Adrenal gland (tissue), 19 donors: ENCODE measurements at regions of chr2 and their contacts with region 1.

Region 1: DNA sequence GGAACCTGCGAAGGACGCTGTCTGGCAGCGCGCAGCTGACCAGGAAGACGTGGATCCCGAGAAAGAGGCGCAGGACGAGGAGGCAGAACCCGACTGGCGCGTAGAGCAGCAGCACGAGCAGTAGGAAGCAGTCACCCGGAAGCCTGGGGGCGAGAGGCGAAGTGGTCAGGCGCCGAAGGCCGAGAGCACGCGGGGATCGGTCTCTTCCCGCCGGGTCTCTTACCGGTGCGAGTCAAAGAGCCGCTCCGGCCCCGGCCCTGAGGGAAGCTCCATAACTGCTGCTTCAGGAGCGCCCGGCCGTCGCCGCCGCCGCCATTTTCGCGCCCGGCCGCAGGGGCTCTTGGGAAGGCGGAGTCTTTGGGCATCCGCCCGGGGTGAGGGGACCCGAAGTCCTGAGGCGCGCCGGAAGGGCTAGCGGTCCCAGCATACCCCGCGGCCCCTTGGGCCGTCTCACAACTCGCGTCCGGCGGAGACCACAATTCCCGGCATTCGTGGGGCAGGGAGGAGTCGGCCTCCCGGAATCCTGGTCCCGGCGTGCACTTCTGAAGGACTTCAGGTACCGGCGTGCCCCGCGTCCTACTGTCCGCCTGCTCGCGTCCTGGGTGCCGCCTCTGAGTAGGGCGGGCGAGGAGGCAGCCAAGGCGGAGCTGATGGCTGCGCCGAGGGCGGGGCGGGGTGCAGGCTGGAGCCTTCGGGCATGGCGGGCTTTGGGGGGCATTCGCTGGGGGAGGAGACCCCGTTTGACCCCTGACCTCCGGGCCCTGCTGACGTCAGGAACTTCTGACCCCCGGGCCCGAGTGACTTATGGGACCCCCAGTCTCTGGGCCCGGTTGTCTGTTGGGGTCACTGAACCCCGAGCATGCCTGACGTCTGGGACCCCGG is at the starts of genes AUP1 and HTRA2:
- DNase-seq: peak; percentile 98 to 99 (median 99)
- H3K4me3 ChIP-seq: peak within 1 kb of the TSS; percentile 63 to 87 (median 78)
- H3K27ac ChIP-seq: peak within 1 kb of the TSS; percentile 65 to 93 (median 83)
- H3K4me1 ChIP-seq: peaks cover 11 to 15% of the 10 kb centered on the region in 2 donors
- H3K27me3 ChIP-seq: no peaks in the 10 kb centered on the region
- CTCF ChIP-seq: peak in 3 of 6 experiments; percentile 2 to 20 (median 14)
- POLR2A ChIP-seq: peak; percentile 42 to 76
- total RNA-seq, gene AUP1: 88.5 to 124 (median 109) TPM
- total RNA-seq, gene HTRA2: 19.1 to 47.4 (median 37.0) TPM

Region 2: GRCh38 chr2:74092275-74092674 is 437.3 kb before region 1 on chr2:
- intact Hi-C with region 1: no loop called
- DNase-seq: peak in 1 of 7 donors; percentile 46
- H3K4me3 ChIP-seq: no peak overlapping the region
- H3K27ac ChIP-seq: peak overlapping the region in 1 of 5 donors; percentile 55
- H3K4me1 ChIP-seq: no peaks in the 10 kb centered on the region
- H3K27me3 ChIP-seq: no peaks in the 10 kb centered on the region
- CTCF ChIP-seq: no peak
- POLR2A ChIP-seq: no peak

Region 3: DNA sequence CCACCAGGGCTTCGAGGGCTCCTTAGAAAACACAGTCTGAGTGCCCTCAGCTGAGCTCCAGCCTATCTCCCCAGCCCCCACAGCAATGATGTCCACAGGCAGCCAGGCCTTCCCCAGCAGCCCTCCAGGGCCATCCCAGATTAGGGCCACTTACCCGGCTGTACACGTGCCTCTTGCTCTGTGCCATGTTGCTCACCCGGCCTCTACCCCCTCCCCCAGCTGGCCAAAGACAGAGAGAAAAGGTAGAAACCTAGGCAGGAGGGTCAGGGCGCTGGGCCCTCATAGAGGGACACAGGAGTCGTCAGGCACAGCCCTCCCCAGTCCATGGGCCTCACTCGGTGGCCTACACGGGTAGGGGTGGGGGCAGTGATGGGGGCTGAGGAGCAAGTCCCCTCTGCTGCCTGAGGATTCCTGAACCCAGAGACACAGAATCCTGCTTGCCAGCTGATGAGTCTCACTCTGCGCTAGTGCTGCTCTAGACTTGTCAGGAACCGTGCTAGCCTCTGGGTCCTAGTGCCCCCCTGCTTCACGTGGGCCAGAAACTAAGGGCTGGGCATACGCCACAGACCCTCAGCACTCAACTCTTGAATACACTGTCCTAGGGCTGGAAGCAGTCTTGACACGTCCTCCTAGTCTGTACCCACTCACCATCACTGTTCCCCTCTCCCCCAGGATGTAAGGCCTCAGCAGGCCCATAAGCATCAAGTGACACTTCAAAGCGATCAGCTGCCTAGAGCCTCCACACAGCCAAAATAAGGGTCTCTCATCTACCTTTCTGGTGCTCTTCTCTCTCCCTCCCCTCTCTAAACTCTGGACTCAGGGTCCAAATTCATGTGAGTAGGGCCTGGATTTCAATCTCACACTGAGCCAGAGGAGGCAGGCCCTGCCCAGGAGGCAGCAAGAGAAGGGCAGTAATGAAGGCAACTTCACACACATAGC is 149.5 kb before region 1 on chr2 and contains the start of gene DCTN1:
- intact Hi-C with region 1: no loop called
- DNase-seq: peak; percentile 70 to 82 (median 78)
- H3K4me3 ChIP-seq: peak within 1 kb of the TSS in 2 of 4 donors; percentile 26 to 43
- H3K27ac ChIP-seq: peak within 1 kb of the TSS in 3 of 5 donors; percentile 61 to 84 (median 83)
- H3K4me1 ChIP-seq: peaks cover 21 to 51% of the 10 kb centered on the region in 2 donors
- H3K27me3 ChIP-seq: no peaks in the 10 kb centered on the region
- CTCF ChIP-seq: no peak
- POLR2A ChIP-seq: peak in 1 of 2 donors; percentile 62
- total RNA-seq, gene DCTN1: 106 to 188 (median 146) TPM

Region 4: GRCh38 chr2:74488644-74489481 is 40.7 kb before region 1 on chr2:
- intact Hi-C with region 1: loop called in 1 of 2 experiments (anchors 5 kb)
- DNase-seq: no peak
- H3K4me3 ChIP-seq: no peak overlapping the region
- H3K27ac ChIP-seq: no peak overlapping the region
- H3K4me1 ChIP-seq: peaks cover 0 to 5% of the 10 kb centered on the region in 2 donors
- H3K27me3 ChIP-seq: no peaks in the 10 kb centered on the region
- CTCF ChIP-seq: no peak
- POLR2A ChIP-seq: no peak

Region 5: GRCh38 chr2:74507145-74507925 is 22.3 kb before region 1 on chr2 and contains the start of gene PCGF1:
- intact Hi-C with region 1: loop called in 1 of 2 experiments (anchors 2 kb)
- DNase-seq: peak; percentile 97 to 100 (median 99)
- H3K4me3 ChIP-seq: peak within 1 kb of the TSS; percentile 5 to 91 (median 80)
- H3K27ac ChIP-seq: peak within 1 kb of the TSS; percentile 29 to 100 (median 95)
- H3K4me1 ChIP-seq: peaks cover 19 to 50% of the 10 kb centered on the region in 2 donors
- H3K27me3 ChIP-seq: peaks cover 19% of the 10 kb centered on the region
- CTCF ChIP-seq: peak in 2 of 6 experiments; percentile 27 to 39
- POLR2A ChIP-seq: peak; percentile 33 to 57
- total RNA-seq, gene PCGF1: 15.4 to 38.9 (median 21.1) TPM